CD8-positive, alpha-beta memory T cell (primary cell): ENCODE measurements at regions of chr2 and their contacts with region 1.

Region 1: GRCh38 chr2:152710713-152711112 is 6.5 kb downstream of the PRPF40A start:
- DNase-seq: no peak
- H3K4me3 ChIP-seq: no peak overlapping the region
- H3K4me3 Mint-ChIP-seq: no peak overlapping the region
- H3K27ac ChIP-seq: no peak overlapping the region
- H3K27ac Mint-ChIP-seq: peak overlapping the region in 1 of 8 donors; percentile 68
- H3K4me1 ChIP-seq: peaks cover 16% of the 10 kb centered on the region
- H3K4me1 Mint-ChIP-seq: peaks cover 69 to 92% (median 91%) of the 10 kb centered on the region in 3 donors
- H3K27me3 ChIP-seq: no peaks in the 10 kb centered on the region
- H3K27me3 Mint-ChIP-seq: no peaks in the 10 kb centered on the region

Region 2: DNA sequence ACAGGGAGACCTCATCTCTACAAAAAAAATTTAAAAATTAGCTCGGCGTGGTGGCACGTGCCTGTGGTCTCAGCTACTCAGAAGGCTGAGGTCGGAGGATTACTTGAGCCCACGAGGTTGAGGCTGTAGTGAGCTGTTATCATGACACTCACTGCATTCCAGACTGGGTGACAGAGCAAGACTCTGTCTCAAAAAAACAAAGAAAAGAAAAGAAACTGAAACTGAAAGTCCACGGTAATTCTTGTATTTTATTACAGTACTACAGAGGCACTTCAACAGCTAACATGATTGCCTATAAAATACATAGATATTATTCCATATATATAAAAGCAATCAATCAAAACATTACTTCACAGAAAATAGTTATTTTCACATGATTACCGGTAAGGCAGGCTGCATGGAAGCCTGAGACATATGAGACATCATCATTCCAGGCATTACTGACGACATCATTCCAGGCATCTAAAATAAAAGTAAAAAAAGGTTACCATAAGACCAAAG is 16.5 kb before region 1 on chr2:
- CTCF ChIA-PET with region 1: interaction called, 4 read pairs
- POLR2A ChIA-PET with region 1: interaction called, 12 read pairs
- DNase-seq: peak; percentile 7 to 53 (median 10)
- H3K4me3 ChIP-seq: no peak overlapping the region
- H3K4me3 Mint-ChIP-seq: peak overlapping the region; percentile 74 to 90 (median 87)
- H3K27ac ChIP-seq: peak overlapping the region; percentile 49
- H3K27ac Mint-ChIP-seq: peak overlapping the region; percentile 83 to 97 (median 93)
- H3K4me1 ChIP-seq: peaks cover 15% of the 10 kb centered on the region
- H3K4me1 Mint-ChIP-seq: peaks cover 36 to 72% (median 67%) of the 10 kb centered on the region in 3 donors
- H3K27me3 ChIP-seq: no peaks in the 10 kb centered on the region
- H3K27me3 Mint-ChIP-seq: no peaks in the 10 kb centered on the region